Right ventricle myocardium inferior (tissue), 1 donor: ENCODE measurements at regions of chr21 and their contacts with region 1.

Region 1: DNA sequence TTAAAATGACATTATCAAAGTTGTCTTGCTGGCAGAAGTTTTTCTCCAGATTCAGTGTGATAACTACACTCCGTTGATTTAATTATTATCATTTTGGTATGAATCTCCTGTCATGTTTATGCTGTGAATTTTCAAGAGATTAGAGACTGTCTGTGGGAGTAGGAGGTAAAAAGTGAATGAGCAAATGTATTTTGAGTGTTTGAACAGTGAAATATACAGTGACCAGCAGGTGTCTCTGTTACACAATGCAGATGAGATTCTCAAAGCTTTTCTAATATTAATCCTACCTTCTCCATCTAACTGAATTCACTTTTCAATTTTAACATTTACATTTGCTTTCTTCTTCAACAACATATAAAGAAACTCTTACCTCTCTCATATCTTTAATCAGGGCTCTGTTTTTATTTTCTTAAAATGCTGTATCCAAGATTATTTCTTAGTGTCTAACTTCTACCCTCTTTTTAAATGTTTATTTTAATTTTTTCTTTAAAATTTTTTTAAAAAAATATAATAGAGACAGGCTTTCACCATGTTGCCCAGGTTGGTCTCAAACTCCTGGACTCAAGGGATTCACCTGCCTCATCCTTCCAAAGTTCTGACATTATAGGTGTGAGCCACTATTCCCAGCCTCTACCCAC is 20.9 kb upstream of the HSPA13 start:
- DNase-seq: no peak
- ATAC-seq: no peak

Region 2: GRCh38 chr21:14012409-14012808 is 391.4 kb before region 1 on chr21:
- intact Hi-C with region 1: no loop called
- DNase-seq: no peak
- ATAC-seq: no peak

Region 3: GRCh38 chr21:14259747-14260146 is 144.1 kb before region 1 on chr21:
- intact Hi-C with region 1: loop called (anchors 10 kb)
- DNase-seq: no peak
- ATAC-seq: no peak

Region 4: GRCh38 chr21:14477133-14477532 is 73.3 kb after region 1 on chr21:
- intact Hi-C with region 1: no loop called
- DNase-seq: no peak
- ATAC-seq: no peak